Activated CD4-positive, alpha-beta T cell treated with anti-CD3 and anti-CD28 coated beads for 36 hours (primary cell): ENCODE measurements at regions of chr1 and their contacts with region 1.

Region 1: GRCh38 chr1:108963052-108963686 is at the start of gene CLCC1:
- DNase-seq: peak; percentile 96
- ATAC-seq: peak; percentile 97
- H3K4me3 Mint-ChIP-seq: peak within 1 kb of the TSS; percentile 81
- H3K27ac Mint-ChIP-seq: peak within 1 kb of the TSS; percentile 91
- H3K4me1 Mint-ChIP-seq: peaks cover 26% of the 10 kb centered on the region
- H3K27me3 Mint-ChIP-seq: no peaks in the 10 kb centered on the region
- total RNA-seq, gene CLCC1: 15.7 to 17.1 TPM

Region 2: GRCh38 chr1:108785264-108785663 is 177.9 kb before region 1 on chr1:
- CTCF ChIA-PET with region 1: no interaction called
- POLR2A ChIA-PET with region 1: no interaction called
- intact Hi-C with region 1: no loop called
- DNase-seq: no peak
- ATAC-seq: no peak
- H3K4me3 Mint-ChIP-seq: no peak overlapping the region
- H3K27ac Mint-ChIP-seq: no peak overlapping the region
- H3K4me1 Mint-ChIP-seq: no peaks in the 10 kb centered on the region
- H3K27me3 Mint-ChIP-seq: no peaks in the 10 kb centered on the region

Region 3: DNA sequence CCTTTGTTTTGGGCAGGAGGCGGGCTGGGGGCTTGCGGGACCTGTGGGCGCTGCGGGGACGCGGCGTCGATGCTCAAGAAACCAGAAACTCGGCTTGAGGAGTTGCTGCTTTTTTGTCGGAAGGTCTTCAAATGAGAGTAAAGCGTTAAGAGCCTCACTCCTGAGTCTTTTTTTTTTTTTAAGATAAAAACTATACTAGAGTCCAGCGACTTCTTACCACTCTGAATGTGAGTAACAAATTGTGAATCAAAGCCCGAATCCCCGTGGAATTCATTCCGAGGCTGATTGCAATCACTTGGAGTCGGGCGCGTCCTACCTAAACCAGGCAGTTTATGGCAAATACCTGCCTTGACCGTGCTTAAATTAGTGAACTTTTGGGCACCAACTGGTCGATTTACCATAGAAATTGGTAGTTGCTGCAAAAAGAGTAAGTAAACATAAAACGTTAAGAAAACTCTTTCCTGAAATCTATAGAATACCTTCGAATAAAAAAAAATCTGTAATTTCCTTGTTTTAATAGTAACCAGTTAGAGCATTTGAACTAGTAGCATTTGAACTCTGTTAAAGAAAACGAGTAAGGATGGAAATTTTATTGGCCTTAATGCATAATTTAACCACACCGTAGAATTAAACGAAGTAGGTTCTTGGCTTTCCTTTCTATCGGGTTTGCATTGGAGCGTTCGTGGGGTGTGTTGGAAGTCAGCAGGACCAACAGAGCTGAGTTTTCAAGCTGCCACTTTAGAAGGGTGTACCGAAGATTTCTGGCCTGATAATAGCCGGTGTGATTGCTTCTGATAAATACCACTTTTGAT is 85.6 kb before region 1 on chr1:
- CTCF ChIA-PET with region 1: no interaction called
- POLR2A ChIA-PET with region 1: no interaction called
- intact Hi-C with region 1: loop called in 1 of 2 experiments (anchors 2 kb)
- DNase-seq: no peak
- ATAC-seq: peak; percentile 2
- H3K4me3 Mint-ChIP-seq: peak overlapping the region; percentile 91
- H3K27ac Mint-ChIP-seq: peak overlapping the region; percentile 78
- H3K4me1 Mint-ChIP-seq: peaks cover 5% of the 10 kb centered on the region
- H3K27me3 Mint-ChIP-seq: peaks cover 5% of the 10 kb centered on the region

Region 4: GRCh38 chr1:109509176-109510134 is 546.3 kb after region 1 on chr1 and contains the start of gene AMIGO1:
- CTCF ChIA-PET with region 1: no interaction called
- POLR2A ChIA-PET with region 1: no interaction called
- intact Hi-C with region 1: loop called in 1 of 2 experiments (anchors 5 kb)
- DNase-seq: peak; percentile 73
- ATAC-seq: peak; percentile 56
- H3K4me3 Mint-ChIP-seq: peak within 1 kb of the TSS; percentile 77
- H3K27ac Mint-ChIP-seq: peak within 1 kb of the TSS; percentile 76
- H3K4me1 Mint-ChIP-seq: peaks cover 59% of the 10 kb centered on the region
- H3K27me3 Mint-ChIP-seq: no peaks in the 10 kb centered on the region
- total RNA-seq, gene AMIGO1: 1.8 to 2.0 TPM